ENCODE measurements at regions of chr3 and their contacts with region 1.

Region 1: DNA sequence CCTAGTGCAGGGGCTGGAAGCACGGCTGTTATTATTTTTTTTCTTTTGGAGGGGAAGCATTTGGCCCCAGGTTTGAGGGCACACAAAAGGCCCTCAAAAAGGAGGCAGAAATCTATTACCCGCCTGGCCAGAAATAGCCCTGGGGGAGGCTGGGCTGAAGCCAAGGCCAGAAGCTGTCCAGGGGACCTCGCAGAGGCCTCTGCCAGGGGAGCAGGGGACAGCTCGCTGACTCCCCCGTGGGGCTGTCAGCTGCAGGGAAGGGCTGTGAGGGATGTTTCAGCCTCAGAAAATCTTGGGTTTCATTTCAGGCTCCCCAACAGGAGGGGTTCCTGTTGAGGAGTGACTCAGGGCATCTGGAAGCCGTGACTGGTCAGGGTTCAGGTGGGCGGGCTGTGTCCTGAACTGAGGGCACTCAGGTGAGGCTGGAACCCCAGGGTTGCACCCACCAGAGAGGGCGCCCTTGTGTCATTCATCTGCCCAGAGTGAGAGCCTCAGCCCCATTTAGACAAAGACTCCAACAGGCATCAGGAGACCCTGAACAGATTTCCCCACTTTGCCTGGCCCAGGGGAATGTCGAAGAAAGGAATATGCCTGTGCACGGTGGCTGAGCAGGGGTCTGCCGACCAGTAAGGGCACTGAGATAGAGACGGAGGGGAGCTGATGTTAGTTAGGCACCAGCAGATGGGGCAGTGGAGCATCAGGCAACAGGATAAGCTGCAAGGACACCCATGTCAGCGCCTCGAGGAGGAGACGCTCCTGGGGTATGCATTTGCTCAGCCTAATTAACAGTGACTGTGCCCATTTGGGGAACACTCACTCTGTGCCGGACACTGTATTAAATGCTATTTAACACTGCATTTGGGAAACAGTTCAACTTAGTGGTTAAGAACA is 43.5 kb upstream of the SLC6A11 start:
- DNase-seq: peak; percentile 36
- H3K4me3 Mint-ChIP-seq: no peak overlapping the region
- H3K27ac Mint-ChIP-seq: no peak overlapping the region
- H3K4me1 Mint-ChIP-seq: peaks cover 6% of the 10 kb centered on the region
- H3K27me3 Mint-ChIP-seq: no peaks in the 10 kb centered on the region
- CTCF ChIP-seq: peak; percentile 36

Region 2: GRCh38 chr3:10783357-10784351 is 11.1 kb after region 1 on chr3:
- CTCF ChIA-PET with region 1: interaction called, 10 read pairs
- POLR2A ChIA-PET with region 1: no interaction called
- intact Hi-C with region 1: no loop called
- DNase-seq: peak; percentile 51
- H3K4me3 Mint-ChIP-seq: no peak overlapping the region
- H3K27ac Mint-ChIP-seq: no peak overlapping the region
- H3K4me1 Mint-ChIP-seq: peaks cover 11% of the 10 kb centered on the region
- H3K27me3 Mint-ChIP-seq: peaks cover 37% of the 10 kb centered on the region
- CTCF ChIP-seq: peak; percentile 86

Region 3: GRCh38 chr3:10883478-10884234 is 111.1 kb after region 1 on chr3:
- CTCF ChIA-PET with region 1: interaction called, 15 read pairs
- POLR2A ChIA-PET with region 1: no interaction called
- intact Hi-C with region 1: no loop called
- DNase-seq: peak; percentile 34
- H3K4me3 Mint-ChIP-seq: no peak overlapping the region
- H3K27ac Mint-ChIP-seq: no peak overlapping the region
- H3K4me1 Mint-ChIP-seq: peaks cover 8% of the 10 kb centered on the region
- H3K27me3 Mint-ChIP-seq: no peaks in the 10 kb centered on the region
- CTCF ChIP-seq: peak; percentile 36